ENCODE measurements at regions of chr17 and their contacts with region 1.

Region 1: DNA sequence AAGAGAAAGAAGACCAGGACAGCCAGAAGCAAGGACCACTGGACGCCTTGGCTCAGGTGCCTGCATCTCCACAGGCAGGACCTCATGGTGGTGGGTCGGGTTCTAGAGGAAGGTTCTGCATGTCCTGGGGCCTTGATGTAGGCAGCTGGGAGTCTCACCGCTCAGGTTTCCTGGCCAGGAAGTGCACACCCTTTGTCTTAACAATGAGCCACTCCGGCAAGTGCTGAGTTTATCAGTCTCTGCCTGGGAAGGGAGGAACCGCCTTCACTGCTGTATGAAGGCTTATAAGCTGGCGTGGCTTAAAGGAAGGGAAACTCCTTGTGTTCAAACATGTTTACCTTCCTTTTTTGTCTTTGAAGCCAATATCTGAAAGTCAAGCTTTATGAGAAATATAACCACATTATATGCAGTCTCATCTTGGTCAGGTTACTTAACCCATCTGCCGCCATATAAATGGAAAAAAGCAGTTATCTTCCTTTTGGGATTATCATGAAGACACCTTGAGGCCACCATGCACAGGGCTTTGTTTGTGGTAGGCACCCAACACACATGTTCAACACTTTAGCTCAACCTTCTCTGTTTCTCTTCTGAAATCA is at the start of gene ST6GALNAC1:
- DNase-seq: peak; percentile 68
- H3K4me3 Mint-ChIP-seq: peak within 1 kb of the TSS; percentile 72
- H3K27ac Mint-ChIP-seq: peak within 1 kb of the TSS; percentile 70
- H3K4me1 Mint-ChIP-seq: peaks cover 68% of the 10 kb centered on the region
- H3K27me3 Mint-ChIP-seq: no peaks in the 10 kb centered on the region
- CTCF ChIP-seq: no peak
- total RNA-seq, gene ST6GALNAC1: 52.2 and 52.4 TPM in 2 replicates

Region 2: GRCh38 chr17:76671123-76671911 is 27.7 kb after region 1 on chr17:
- CTCF ChIA-PET with region 1: interaction called, 6 read pairs
- intact Hi-C with region 1: loop called (anchors 1 kb)
- DNase-seq: peak; percentile 99
- H3K4me3 Mint-ChIP-seq: peak overlapping the region; percentile 82
- H3K27ac Mint-ChIP-seq: peak overlapping the region; percentile 81
- H3K4me1 Mint-ChIP-seq: peaks cover 31% of the 10 kb centered on the region
- H3K27me3 Mint-ChIP-seq: no peaks in the 10 kb centered on the region
- CTCF ChIP-seq: no peak

Region 3: DNA sequence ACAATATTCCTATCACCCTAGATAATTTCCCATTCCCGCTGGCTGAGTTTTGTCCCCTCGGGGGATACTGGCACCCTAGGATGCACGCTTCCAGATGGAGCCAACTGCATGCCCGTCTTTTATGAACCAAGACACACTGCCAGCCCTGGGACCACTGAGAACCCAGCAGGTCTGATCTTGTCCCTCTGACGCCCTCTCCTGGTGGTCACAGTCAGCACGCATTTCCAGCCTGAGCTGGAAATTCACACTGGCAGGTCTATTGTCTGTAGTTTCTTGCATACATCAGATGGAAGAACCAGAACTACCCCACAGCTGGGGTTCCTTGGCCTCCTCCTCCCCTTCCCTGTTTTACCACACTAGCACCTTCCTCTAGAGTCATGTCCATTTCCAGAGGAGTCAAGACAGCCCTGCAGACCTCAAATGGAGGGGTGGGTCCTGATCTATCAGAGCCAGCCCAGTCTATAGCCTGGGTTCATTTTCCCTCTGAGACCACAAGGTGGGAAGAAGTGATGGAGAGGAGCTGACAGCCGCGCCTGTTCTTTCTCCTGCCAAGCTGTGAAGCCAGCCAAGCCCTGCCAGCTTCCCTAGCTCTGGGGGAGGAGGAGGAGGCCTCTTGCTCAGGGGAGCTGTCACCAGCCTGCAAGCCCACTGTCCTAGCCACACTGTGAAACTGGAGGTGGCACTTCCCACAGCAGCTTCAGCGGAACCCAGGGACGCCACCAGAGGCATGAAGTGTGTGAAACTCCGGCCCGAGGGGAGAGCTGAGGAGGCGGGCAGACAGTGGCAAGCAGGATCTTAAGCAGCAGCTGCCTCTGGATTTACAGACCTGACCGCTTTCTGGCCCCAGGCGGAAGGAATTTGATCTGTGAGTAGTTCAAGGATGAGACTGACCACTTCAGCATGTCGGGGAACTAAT is 37.8 kb after region 1 on chr17:
- CTCF ChIA-PET with region 1: interaction called, 5 read pairs
- intact Hi-C with region 1: loop called (anchors 1 kb)
- DNase-seq: peak; percentile 85
- H3K4me3 Mint-ChIP-seq: no peak overlapping the region
- H3K27ac Mint-ChIP-seq: no peak overlapping the region
- H3K4me1 Mint-ChIP-seq: peaks cover 6% of the 10 kb centered on the region
- H3K27me3 Mint-ChIP-seq: no peaks in the 10 kb centered on the region
- CTCF ChIP-seq: peak; percentile 68

Region 4: DNA sequence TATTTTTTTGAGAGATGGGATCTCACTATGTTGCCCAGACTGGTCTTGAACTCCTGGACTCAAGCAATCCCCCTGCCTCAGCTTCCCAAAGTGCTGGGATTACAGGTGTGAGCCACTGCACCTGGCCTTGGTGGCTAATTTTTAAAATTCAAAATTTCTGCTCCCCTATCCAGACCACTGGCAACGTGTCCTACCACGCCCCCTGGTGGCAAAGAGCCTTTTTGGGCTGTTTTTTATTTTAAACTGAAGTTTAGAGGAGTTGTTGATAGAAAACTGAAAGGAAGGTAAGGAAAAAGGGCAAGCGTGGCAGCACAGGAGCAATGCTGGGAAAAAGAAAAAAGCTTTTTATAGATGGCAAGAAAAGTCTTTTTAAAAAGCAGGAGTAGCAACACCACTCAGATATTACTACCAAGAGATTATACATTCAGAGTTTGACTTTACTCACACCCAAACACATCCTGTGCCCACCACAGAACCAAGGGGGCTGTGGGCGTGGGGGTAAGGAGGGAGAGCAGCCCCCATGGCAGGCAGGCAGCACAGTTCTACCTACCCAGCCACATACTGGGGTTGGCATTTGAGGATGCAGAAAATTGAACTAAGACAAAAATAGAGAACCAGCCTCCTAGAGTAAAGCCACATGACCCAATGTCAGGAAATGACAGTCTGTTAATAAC is 71.3 kb after region 1 on chr17:
- CTCF ChIA-PET with region 1: no interaction called
- intact Hi-C with region 1: loop called (anchors 10 kb)
- DNase-seq: peak; percentile 79
- H3K4me3 Mint-ChIP-seq: no peak overlapping the region
- H3K27ac Mint-ChIP-seq: no peak overlapping the region
- H3K4me1 Mint-ChIP-seq: peaks cover 13% of the 10 kb centered on the region
- H3K27me3 Mint-ChIP-seq: no peaks in the 10 kb centered on the region
- CTCF ChIP-seq: peak; percentile 78